ENCODE measurements at regions of chr15 and their contacts with region 1.

Region 1: DNA sequence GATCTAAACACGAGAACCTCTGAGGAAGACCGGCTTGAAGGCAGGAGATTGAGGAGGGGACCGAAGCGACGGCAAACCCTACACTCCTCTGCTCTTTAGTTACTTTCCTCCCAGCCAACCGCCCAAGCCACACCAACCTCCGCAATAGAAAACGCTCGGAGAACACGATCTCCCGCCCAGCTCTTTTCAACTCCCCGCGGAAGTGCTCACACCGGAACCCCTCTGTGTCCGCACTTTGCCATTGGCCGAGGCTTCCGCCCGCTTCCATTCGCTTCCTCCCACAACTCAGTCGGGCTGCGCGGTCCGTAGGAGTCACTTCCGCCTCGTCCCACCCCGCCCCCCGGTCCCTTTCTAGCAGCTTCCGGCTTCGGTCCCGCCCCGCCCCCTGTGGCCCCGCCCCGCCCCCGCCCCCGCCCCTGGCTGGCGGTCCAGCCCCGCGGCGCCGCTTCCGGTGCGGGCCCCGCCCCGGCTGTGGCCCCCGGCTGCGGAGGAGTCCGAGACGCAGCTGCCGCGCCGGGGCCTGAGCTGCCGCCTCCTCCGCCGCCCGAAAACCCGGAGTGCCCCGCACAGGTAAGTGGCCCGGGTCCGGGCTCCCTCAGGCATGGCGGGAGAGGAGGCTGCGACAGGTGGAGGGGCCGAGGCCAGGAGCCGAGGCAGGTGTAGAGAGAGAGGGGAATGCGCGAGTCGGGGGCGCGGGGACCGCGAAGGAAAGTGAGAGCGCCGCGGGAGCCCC is at the start of gene ARID3B:
- DNase-seq: peak; percentile 95 to 99 (median 96)

Region 2: GRCh38 chr15:73601451-73602445 is 939.2 kb before region 1 on chr15:
- intact Hi-C with region 1: no loop called
- DNase-seq: peak in 7 of 10 donors; percentile 15 to 78 (median 27)

Region 3: GRCh38 chr15:74222240-74223119 is 318.4 kb before region 1 on chr15:
- intact Hi-C with region 1: no loop called
- DNase-seq: peak in 1 of 10 donors; percentile 50

Region 4: GRCh38 chr15:74460871-74461846 is 79.8 kb before region 1 on chr15 and contains the start of gene UBL7:
- intact Hi-C with region 1: loop called (anchors 2 kb)
- DNase-seq: peak; percentile 96 to 100 (median 98)

Region 5: GRCh38 chr15:74584779-74585178 is 43.9 kb after region 1 on chr15:
- intact Hi-C with region 1: no loop called
- DNase-seq: peak in 5 of 10 donors; percentile 49 to 94 (median 64)

Region 6: DNA sequence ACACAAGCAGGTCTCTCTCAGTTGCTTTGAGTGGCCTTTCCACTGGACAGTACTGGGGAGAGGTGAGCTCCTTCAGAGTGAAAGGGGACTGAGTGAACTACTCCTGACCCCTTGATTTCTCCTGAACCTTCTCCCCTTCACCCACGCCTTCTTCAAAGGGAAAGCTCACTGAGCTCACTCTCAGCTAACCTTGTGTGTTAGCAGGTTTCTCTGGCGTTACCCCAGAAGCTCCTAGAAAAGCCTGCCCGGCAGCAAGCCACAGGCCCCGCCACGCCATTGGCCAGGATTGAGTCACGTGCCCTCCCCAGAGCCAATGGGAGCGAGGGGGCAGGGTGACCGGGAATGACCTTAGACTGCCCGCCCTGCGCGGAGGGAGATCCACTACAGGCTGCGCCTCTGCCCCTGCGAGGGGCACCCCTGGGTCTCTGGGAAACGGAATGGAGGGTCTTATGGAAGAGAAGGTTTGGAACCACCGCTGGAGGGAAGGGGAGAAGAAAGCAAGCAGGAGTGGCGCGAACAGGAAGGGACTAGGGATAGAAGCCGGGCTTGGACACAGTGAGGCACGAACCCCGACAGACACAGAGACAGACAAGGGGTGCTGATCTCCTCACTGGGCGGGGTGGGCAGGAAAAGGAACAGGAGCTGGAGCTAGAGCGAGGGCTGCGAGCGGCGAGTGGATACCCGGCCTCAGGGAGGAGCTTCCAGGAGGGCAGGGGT is 57.4 kb after region 1 on chr15:
- intact Hi-C with region 1: loop called (anchors 5 kb)
- DNase-seq: peak; percentile 88 to 99 (median 96)